H1 (cell line): ENCODE measurements at regions of chr12 and their contacts with region 1.

Region 1: DNA sequence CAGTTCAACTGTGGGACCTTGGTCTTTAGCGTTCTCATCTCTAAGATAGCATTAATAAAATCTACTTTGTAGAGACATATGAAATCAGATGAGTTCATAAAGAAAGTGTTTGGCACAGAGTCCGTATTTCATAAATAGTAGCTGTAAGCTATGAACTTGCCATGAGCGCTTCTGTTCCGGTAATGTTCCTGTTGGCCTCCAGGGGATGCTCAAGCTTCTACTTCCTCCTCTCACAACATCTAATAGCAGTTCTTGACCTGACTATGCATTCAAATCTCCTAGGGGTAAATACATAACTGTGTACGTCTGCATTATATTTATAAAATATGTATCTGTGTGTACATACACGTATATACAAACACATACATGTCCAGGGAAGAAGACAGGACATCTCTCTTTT is 288.2 kb upstream of the TMPO start:
- DNase-seq: no peak
- H3K4me3 ChIP-seq: no peak overlapping the region
- H3K27ac ChIP-seq: no peak overlapping the region
- H3K4me1 ChIP-seq: no peaks in the 10 kb centered on the region
- H3K27me3 ChIP-seq: no peaks in the 10 kb centered on the region
- CTCF ChIP-seq: peak; percentile 37 to 80 (median 63)
- EP300 ChIP-seq: no peak
- POLR2A ChIP-seq: no peak
- RAD21 ChIP-seq: peak; percentile 81 to 83

Region 2: DNA sequence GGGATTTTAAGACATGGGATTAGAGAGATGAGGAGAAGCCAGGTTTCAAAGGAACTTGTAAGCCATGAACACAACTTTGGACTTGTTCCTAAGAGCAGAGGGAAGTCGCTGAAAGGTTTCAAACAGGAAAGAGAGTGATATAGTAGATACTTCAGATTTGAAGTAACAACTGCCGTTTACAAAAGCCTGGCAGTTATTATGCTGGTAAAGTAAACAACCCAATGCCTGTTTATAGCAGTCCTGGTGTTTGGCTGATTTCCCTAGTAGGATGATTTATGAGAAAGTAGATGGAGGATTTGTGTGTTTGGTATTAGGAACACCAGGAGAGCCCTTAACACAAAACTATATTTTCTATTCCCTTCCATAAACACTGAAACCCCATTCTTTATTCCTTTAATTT is 478.9 kb before region 1 on chr12:
- CTCF ChIA-PET with region 1: no interaction called
- POLR2A ChIA-PET with region 1: no interaction called
- DNase-seq: no peak
- H3K4me3 ChIP-seq: no peak overlapping the region
- H3K27ac ChIP-seq: no peak overlapping the region
- H3K4me1 ChIP-seq: peaks cover 0 to 4% (median 0%) of the 10 kb centered on the region in 4 experiments; a peak in 1 of 7 replicates
- H3K27me3 ChIP-seq: no peaks in the 10 kb centered on the region
- CTCF ChIP-seq: no peak
- EP300 ChIP-seq: no peak
- POLR2A ChIP-seq: no peak
- RAD21 ChIP-seq: no peak

Region 3: GRCh38 chr12:98194591-98194990 is 32.6 kb before region 1 on chr12:
- CTCF ChIA-PET with region 1: interaction called, 18 read pairs
- POLR2A ChIA-PET with region 1: interaction called, 3 read pairs
- DNase-seq: no peak
- H3K4me3 ChIP-seq: no peak overlapping the region
- H3K27ac ChIP-seq: no peak overlapping the region
- H3K4me1 ChIP-seq: peaks cover 0 to 4% (median 0%) of the 10 kb centered on the region in 4 experiments; a peak in 1 of 7 replicates
- H3K27me3 ChIP-seq: no peaks in the 10 kb centered on the region
- CTCF ChIP-seq: no peak
- EP300 ChIP-seq: no peak
- POLR2A ChIP-seq: no peak
- RAD21 ChIP-seq: no peak

Region 4: DNA sequence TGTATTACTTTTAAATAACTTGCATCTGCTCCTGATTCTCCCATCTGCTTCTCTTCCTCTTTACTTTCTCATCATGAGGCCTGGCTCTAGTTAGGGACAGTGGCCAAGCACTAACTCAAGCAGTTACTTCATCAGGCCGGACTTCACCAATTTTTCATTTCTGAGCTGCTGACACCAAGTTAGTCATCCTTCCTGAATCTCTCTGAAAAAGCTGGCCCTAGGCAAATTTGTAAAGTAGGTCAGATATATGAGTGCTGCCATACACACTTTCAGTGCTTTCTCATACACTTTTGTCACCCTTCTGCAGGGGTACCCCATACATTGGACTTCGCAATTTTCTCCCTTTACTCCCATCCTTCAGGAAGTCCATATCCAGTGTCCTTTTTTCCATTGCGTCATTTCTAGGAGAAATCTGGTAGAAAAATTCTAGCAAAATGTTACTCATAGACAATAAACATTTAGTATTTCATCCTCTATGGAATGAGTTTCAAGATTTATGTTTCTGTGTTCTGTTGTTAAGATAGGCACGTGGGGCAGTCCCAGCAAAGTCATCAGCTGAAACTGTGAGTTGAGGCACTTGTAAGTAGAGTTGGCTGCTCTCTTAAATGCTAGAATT is 11.5 kb after region 1 on chr12:
- CTCF ChIA-PET with region 1: interaction called, 47 read pairs
- POLR2A ChIA-PET with region 1: no interaction called
- DNase-seq: no peak
- H3K4me3 ChIP-seq: no peak overlapping the region
- H3K27ac ChIP-seq: no peak overlapping the region
- H3K4me1 ChIP-seq: no peaks in the 10 kb centered on the region
- H3K27me3 ChIP-seq: peaks cover 0 to 1% (median 0%) of the 10 kb centered on the region in 4 experiments; a peak in 1 of 7 replicates
- CTCF ChIP-seq: no peak
- EP300 ChIP-seq: no peak
- POLR2A ChIP-seq: no peak
- RAD21 ChIP-seq: no peak

Region 5: GRCh38 chr12:98253207-98254037 is 26.3 kb after region 1 on chr12:
- CTCF ChIA-PET with region 1: interaction called, 15 read pairs
- POLR2A ChIA-PET with region 1: no interaction called
- DNase-seq: no peak
- H3K4me3 ChIP-seq: no peak overlapping the region
- H3K27ac ChIP-seq: no peak overlapping the region
- H3K4me1 ChIP-seq: peaks cover 0 to 12% (median 3%) of the 10 kb centered on the region in 4 experiments; a peak in 5 of 7 replicates
- H3K27me3 ChIP-seq: peaks cover 0 to 1% (median 0%) of the 10 kb centered on the region in 4 experiments; a peak in 1 of 7 replicates
- CTCF ChIP-seq: no peak
- EP300 ChIP-seq: no peak
- POLR2A ChIP-seq: no peak
- RAD21 ChIP-seq: no peak

Region 6: GRCh38 chr12:98296462-98297079 is 69.4 kb after region 1 on chr12:
- CTCF ChIA-PET with region 1: interaction called, 21 read pairs
- POLR2A ChIA-PET with region 1: no interaction called
- DNase-seq: peak in 1 of 2 experiments; percentile 60
- H3K4me3 ChIP-seq: no peak overlapping the region
- H3K27ac ChIP-seq: no peak overlapping the region
- H3K4me1 ChIP-seq: peaks cover 0 to 3% (median 0%) of the 10 kb centered on the region in 4 experiments; a peak in 3 of 7 replicates
- H3K27me3 ChIP-seq: no peaks in the 10 kb centered on the region
- CTCF ChIP-seq: no peak
- EP300 ChIP-seq: no peak
- POLR2A ChIP-seq: no peak
- RAD21 ChIP-seq: no peak

Region 7: GRCh38 chr12:98373025-98373554 is 145.9 kb after region 1 on chr12:
- CTCF ChIA-PET with region 1: interaction called, 39 read pairs
- POLR2A ChIA-PET with region 1: no interaction called
- DNase-seq: no peak
- H3K4me3 ChIP-seq: no peak overlapping the region
- H3K27ac ChIP-seq: no peak overlapping the region
- H3K4me1 ChIP-seq: no peaks in the 10 kb centered on the region; a peak in 1 of 7 replicates
- H3K27me3 ChIP-seq: no peaks in the 10 kb centered on the region
- CTCF ChIP-seq: peak in 2 of 3 experiments; percentile 65 to 71; a peak in 3 of 4 replicates
- EP300 ChIP-seq: no peak
- POLR2A ChIP-seq: no peak
- RAD21 ChIP-seq: peak; percentile 89 to 92

Region 8: GRCh38 chr12:98424726-98425401 is 197.7 kb after region 1 on chr12:
- CTCF ChIA-PET with region 1: interaction called, 10 read pairs
- POLR2A ChIA-PET with region 1: no interaction called
- DNase-seq: no peak
- H3K4me3 ChIP-seq: no peak overlapping the region
- H3K27ac ChIP-seq: no peak overlapping the region
- H3K4me1 ChIP-seq: no peaks in the 10 kb centered on the region; a peak in 1 of 7 replicates
- H3K27me3 ChIP-seq: no peaks in the 10 kb centered on the region
- CTCF ChIP-seq: peak; percentile 45 to 73 (median 71)
- EP300 ChIP-seq: no peak
- POLR2A ChIP-seq: no peak
- RAD21 ChIP-seq: peak; percentile 58 to 72